Activated T-helper 1 cell treated with anti-CD3 and anti-CD28 coated beads, Interleukin-12 subunit alpha, Interleukin-12 subunit beta, Interleukin-2, Interleukin-4 antibody, amounts not matched to agents 30 ng/mL and 10 ng/mL and 1 ng/mL, durations not matched to agents 14 hours and 24 hours and 36 hours (primary cell): ENCODE measurements at regions of chr4 and their contacts with region 1.

Region 1: DNA sequence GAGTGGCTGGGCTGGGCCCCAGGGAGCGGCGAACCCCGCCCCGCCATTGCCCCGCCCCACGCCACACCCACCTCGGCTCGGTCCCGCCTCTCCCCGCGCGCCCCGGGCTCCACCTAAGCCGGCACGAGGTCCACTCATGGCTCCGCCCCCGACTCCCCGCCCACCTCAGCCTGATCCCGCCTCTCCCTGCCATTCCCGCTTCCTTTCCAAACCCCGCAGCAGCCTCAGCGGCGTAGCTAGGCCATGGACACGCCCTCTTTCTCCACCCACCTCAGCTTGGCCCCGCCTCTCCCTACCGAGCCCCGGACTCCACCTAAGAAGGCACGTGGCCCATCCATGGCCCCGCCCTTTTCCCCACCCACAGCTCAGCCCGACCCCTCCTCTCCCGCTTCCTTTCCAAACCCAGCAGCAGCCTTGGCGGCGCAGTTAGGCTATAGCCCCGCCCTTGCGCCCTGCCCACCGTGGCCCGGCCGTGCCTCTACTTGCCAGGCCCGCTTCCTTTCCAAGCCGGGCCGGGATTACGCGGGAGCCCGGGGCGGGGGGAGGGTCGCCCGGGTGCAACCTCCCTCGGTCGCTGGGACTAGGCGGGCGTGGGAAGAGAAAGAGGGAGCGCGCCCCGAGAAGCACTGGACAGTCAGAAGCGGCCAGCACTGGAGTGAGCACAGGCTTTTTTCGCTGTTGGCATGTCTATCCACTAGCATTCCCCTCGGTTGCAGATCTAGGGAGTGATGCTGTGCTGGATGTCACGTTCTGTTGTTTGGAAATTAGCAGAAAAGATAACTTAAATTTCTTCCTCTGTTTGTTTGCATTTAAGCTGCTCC is at the start of gene RELL1:
- DNase-seq: peak; percentile 99
- H3K4me3 Mint-ChIP-seq: peak within 1 kb of the TSS; percentile 96
- H3K27ac Mint-ChIP-seq: peak within 1 kb of the TSS; percentile 98
- H3K4me1 Mint-ChIP-seq: peaks cover 40% of the 10 kb centered on the region
- H3K27me3 Mint-ChIP-seq: peaks cover 7% of the 10 kb centered on the region
- total RNA-seq, gene RELL1: 21.0 and 21.4 TPM in 2 replicates

Region 2: GRCh38 chr4:37603070-37603468 is 83.5 kb before region 1 on chr4:
- intact Hi-C with region 1: loop called (anchors 1 kb)
- DNase-seq: peak; percentile 59
- H3K4me3 Mint-ChIP-seq: no peak overlapping the region
- H3K27ac Mint-ChIP-seq: no peak overlapping the region
- H3K4me1 Mint-ChIP-seq: peaks cover 33% of the 10 kb centered on the region
- H3K27me3 Mint-ChIP-seq: no peaks in the 10 kb centered on the region

Region 3: GRCh38 chr4:37715889-37716402 is 29.4 kb after region 1 on chr4:
- intact Hi-C with region 1: loop called (anchors 1 kb)
- DNase-seq: peak; percentile 9
- H3K4me3 Mint-ChIP-seq: no peak overlapping the region
- H3K27ac Mint-ChIP-seq: peak overlapping the region; percentile 88
- H3K4me1 Mint-ChIP-seq: peaks cover 24% of the 10 kb centered on the region
- H3K27me3 Mint-ChIP-seq: peaks cover 2% of the 10 kb centered on the region

Region 4: GRCh38 chr4:37891260-37892159 is 204.9 kb after region 1 on chr4:
- intact Hi-C with region 1: loop called (anchors 1 kb)
- DNase-seq: peak; percentile 53
- H3K4me3 Mint-ChIP-seq: peak overlapping the region; percentile 93
- H3K27ac Mint-ChIP-seq: peak overlapping the region; percentile 95
- H3K4me1 Mint-ChIP-seq: peaks cover 48% of the 10 kb centered on the region
- H3K27me3 Mint-ChIP-seq: peaks cover 19% of the 10 kb centered on the region

Region 5: GRCh38 chr4:39044364-39044955 is 1357.9 kb after region 1 on chr4:
- intact Hi-C with region 1: loop called (anchors 5 kb)
- DNase-seq: peak; percentile 96
- H3K4me3 Mint-ChIP-seq: peak overlapping the region; percentile 85
- H3K27ac Mint-ChIP-seq: peak overlapping the region; percentile 92
- H3K4me1 Mint-ChIP-seq: peaks cover 63% of the 10 kb centered on the region
- H3K27me3 Mint-ChIP-seq: no peaks in the 10 kb centered on the region